RWPE1 (cell line): ENCODE measurements at regions of chr22 and their contacts with region 1.

Region 1: GRCh38 chr22:50232481-50233151 is 12.2 kb downstream of the TUBGCP6 start:
- DNase-seq: no peak
- H3K27ac ChIP-seq: peak overlapping the region; percentile 27
- CTCF ChIP-seq: no peak

Region 2: DNA sequence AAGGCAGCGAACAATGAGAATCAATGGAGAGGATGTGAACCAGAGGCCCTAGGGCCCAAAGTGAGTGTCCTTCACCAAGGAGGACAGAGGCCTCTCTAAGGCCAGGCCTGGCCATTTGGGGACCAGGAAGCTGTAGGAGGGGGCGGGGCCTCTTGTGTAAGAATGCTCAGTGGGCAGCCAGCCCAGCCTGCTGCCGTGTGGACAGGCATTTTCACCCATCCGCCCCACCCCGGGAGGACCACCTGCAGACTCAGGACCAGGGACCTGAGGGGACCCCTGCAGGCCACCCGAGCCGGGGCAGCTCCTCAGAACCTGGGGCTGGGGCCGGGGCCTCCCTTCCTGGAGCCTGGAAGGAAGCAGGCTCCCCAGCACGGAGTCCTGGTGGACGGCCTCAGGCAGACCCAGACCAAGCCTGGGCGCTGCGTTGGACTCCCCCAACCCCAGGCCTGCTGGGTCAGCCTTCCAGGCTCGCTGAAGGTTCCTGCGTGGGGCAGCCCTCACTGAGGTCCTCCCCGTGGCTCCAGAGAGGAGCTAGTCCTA is 48.5 kb before region 1 on chr22:
- CTCF ChIA-PET with region 1: no interaction called
- POLR2A ChIA-PET with region 1: no interaction called
- DNase-seq: no peak
- H3K27ac ChIP-seq: peak overlapping the region; percentile 62
- CTCF ChIP-seq: no peak

Region 3: DNA sequence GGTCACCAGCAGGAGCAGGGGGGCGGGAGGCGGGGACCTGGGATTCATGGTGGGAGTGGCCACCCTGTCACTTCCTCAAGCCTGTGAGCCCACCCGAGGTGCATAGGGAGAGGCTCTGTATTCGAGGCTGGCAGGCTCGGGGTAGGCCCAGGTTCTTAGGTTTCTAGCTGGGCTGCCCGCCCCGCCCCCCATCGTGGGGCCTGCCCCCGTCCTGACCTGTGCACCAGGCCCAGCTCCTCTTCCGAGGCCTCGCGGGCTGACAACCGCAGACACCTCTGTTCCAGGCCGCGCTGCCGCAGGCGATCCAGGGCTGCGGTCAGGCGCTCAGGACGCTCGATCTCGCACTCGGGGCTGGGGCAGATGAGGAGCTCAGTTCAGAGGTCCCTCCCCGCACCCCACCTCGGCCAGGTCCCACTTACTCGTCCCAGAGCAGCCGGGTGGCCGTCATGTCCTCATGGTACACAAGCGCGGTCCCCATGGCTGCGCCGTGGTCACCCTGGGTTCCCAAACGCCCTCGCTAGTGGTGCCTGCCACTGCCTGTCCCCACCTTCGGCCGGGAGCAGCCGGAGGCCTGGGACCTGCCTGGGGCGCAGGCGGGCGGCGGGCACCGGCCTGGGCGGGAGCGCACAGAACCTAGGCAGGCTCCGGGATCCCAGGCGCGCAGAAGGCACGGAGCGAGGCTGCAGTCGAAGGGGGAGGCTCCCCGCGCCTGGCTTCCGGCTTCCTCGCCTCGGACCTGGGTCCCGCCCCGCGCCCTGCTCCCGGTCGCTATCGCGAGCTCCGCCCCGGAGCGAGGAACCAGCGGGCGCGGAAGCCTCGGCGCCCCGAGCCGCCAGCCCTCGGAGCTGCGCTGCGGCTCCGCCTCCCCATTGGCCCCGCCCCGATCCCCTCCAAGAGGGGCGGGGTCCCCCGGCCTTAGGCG is 18.2 kb after region 1 on chr22 and contains the start of gene HDAC10:
- CTCF ChIA-PET with region 1: no interaction called
- POLR2A ChIA-PET with region 1: no interaction called
- DNase-seq: no peak
- H3K27ac ChIP-seq: peak within 1 kb of the TSS; percentile 89
- CTCF ChIP-seq: no peak

Region 4: DNA sequence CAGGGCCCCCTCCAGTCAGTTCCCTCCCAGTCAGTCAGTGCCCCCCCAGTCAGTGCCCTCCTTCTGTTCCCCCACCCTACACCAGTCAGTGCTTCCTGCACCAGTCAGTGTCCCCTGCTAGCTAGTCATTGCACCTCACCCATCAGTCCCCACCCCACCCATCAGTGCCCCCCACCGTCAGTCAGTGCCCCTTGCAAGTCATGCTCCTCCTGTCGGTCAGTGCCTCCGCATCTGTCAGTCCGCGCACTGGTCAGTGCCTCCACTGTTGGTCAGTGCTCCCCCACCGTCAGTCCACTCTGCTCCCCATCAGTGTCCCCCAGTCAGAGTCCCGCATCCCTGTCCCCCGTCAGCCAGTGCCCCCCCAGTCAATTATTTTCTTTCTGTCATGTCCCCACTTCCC is 113.9 kb after region 1 on chr22:
- CTCF ChIA-PET with region 1: interaction called, 10 read pairs
- POLR2A ChIA-PET with region 1: no interaction called
- DNase-seq: no peak
- H3K27ac ChIP-seq: peak overlapping the region; percentile 15
- CTCF ChIP-seq: no peak